Upper lobe of right lung (tissue), 1 donor: ENCODE measurements at regions of chr19 and their contacts with region 1.

Region 1: GRCh38 chr19:984165-984967 is at the start of gene WDR18:
- DNase-seq: peak; percentile 97
- ATAC-seq: peak; percentile 94
- H3K4me3 ChIP-seq: peak within 1 kb of the TSS; percentile 96
- H3K27ac ChIP-seq: peak within 1 kb of the TSS; percentile 90
- H3K4me1 ChIP-seq: peaks cover 20% of the 10 kb centered on the region
- H3K27me3 ChIP-seq: no peaks in the 10 kb centered on the region
- CTCF ChIP-seq: peak; percentile 23
- total RNA-seq, gene WDR18: 21.9 TPM

Region 2: GRCh38 chr19:924943-925525 is 59.3 kb before region 1 on chr19:
- intact Hi-C with region 1: loop called (anchors 5 kb)
- DNase-seq: peak; percentile 72
- ATAC-seq: peak; percentile 51
- H3K4me3 ChIP-seq: peak overlapping the region; percentile 91
- H3K27ac ChIP-seq: peak overlapping the region; percentile 92
- H3K4me1 ChIP-seq: peaks cover 8% of the 10 kb centered on the region
- H3K27me3 ChIP-seq: peaks cover 14% of the 10 kb centered on the region
- CTCF ChIP-seq: no peak